ENCODE measurements at regions of chr15 and their contacts with region 1.

Region 1: GRCh38 chr15:73633111-73633990 is at the start of gene NPTN:
- DNase-seq: peak; percentile 96
- H3K27ac ChIP-seq: peak within 1 kb of the TSS; percentile 97
- CTCF ChIP-seq: no peak

Region 2: DNA sequence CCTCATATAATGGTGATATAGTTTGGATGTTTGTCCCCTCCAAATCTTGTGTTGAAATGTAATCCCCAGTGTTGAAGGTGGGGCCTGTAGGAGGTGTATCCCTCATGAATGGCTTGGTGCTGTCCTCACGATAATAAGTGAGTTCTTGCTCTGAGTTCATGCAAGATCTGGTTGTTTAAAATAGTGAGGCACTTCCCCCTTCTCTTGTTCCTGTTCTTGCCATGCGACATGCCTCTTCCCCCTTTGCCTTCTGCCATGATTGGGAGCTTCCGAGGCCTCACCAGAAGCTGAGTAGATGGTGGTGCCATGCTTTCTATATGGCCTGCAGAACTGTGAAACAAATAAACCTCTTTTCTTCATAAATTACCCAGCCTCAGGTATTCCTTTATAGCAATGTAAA is 151.2 kb before region 1 on chr15:
- CTCF ChIA-PET with region 1: no interaction called
- POLR2A ChIA-PET with region 1: no interaction called
- DNase-seq: no peak
- H3K27ac ChIP-seq: no peak overlapping the region
- CTCF ChIP-seq: no peak

Region 3: GRCh38 chr15:73560501-73561117 is 72.7 kb before region 1 on chr15:
- CTCF ChIA-PET with region 1: interaction called, 15 read pairs
- POLR2A ChIA-PET with region 1: no interaction called
- DNase-seq: peak; percentile 41
- H3K27ac ChIP-seq: no peak overlapping the region
- CTCF ChIP-seq: peak; percentile 50; the same call in 1 of the 2 replicates

Region 4: DNA sequence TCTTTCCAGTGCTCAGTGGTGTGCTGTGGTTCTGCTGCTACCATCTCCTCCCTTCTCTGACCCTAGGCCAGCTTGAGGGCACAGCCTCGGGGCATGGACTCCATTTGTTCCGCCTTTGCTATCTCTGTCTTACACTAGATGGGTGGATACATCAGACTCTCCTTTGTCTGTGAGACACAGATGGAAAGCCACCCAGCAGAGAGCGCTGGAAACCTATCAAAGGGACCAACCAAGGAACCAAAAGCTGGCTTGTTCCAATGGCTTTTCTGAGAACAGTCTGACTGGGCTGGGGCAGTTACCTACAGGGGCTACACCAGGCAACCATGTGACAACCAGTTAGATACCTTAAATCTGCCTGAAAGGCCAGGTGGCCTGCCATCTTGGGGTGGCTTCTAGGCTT is 64.0 kb before region 1 on chr15:
- CTCF ChIA-PET with region 1: interaction called, 11 read pairs
- POLR2A ChIA-PET with region 1: no interaction called
- DNase-seq: no peak
- H3K27ac ChIP-seq: peak overlapping the region; percentile 33; the same call in 1 of the 2 replicates
- CTCF ChIP-seq: no peak

Region 5: DNA sequence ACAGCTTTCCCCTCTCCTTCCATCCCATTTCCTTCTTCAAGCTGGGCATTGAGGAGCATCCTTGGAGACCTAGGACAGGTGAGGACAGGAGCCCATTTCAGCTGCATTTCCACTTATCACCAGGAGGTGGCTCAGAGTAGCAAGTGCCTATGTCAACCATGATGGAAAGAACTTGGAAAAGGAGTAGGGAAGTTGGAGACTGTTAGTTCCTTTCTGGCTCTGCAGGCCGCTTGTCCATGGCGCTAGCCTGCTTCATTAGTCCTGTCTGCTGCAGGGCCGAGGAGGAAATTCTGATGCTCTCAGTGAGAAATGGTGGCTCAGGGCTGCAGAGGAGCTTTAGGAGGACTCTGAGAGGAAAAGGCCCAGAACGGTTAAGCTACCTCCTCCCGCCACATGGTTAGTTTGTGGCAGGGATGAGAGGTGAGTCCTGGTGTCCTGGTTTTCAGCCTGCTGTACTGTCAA is 43.8 kb after region 1 on chr15:
- CTCF ChIA-PET with region 1: interaction called, 15 read pairs
- POLR2A ChIA-PET with region 1: no interaction called
- DNase-seq: peak; percentile 49
- H3K27ac ChIP-seq: no peak overlapping the region
- CTCF ChIP-seq: peak; percentile 77

Region 6: DNA sequence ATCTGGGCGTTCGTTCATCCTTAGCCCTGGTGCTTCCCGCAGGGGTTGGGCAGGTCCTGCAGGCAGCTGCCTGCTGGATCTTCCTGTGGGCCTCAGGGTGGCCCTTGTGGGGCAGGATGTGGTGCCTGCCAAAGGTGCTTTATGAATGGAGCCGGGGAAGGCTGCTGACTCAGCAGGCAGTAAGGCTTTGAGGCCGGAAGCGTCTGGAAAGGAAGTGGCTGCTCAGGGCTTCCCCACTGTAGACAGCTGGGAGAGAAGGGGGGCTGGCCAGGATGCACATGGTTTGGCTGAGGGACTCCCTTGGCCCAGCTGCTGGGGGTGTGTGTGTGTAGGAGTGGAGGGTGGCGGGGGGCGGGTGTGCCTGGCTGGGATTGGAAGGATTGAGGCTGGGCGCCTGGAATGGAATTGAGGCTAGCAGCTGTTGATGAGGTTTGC is 63.7 kb after region 1 on chr15:
- CTCF ChIA-PET with region 1: interaction called, 47 read pairs
- POLR2A ChIA-PET with region 1: no interaction called
- DNase-seq: peak; percentile 93
- H3K27ac ChIP-seq: peak overlapping the region; percentile 84
- CTCF ChIP-seq: no peak

Region 7: DNA sequence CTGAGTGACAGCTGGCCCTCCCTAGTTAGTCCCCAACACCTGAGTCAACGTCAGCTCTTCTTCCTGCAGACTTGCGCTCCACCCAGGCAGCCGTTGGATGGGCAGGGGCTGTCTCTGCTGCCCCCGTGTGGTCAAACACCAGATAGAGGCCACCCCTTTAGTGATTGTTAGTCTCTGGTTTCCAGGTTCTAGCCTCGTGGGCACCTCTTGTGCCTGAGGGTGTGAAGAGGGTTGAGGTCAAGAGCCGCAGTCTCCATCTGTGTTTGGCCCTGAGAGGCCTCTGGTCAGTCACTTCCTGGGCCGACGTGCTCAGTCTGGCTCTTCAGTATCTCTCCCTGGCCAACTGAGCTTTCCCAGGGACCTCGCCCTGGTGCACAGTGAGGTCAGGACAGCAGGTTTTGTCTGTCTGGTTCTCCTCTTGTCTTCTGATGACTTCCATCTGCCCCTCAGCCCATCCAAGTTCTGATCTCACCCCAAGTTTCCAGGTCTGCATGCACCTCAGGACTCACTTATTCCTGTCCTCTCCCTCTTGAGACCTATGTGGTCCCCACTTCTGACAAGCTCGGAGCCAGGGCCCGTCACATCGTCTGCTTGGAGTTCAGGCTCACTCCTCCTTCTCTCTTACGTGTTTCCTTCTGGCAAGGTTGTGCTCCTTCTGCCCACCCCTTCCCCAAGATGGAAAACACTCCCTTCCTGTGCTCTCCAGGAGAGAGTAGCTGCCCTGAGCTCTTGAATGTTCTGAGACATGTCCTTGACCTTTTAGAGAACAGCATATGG is 71.7 kb after region 1 on chr15:
- CTCF ChIA-PET with region 1: interaction called, 47 read pairs
- POLR2A ChIA-PET with region 1: no interaction called
- DNase-seq: peak; percentile 63
- H3K27ac ChIP-seq: peak overlapping the region; percentile 4; the same call in 1 of the 2 replicates
- CTCF ChIP-seq: peak; percentile 88

Measured in RWPE1 (cell line).